T-cell (primary cell): ENCODE measurements at regions of chr5 and their contacts with region 1.

Region 1: DNA sequence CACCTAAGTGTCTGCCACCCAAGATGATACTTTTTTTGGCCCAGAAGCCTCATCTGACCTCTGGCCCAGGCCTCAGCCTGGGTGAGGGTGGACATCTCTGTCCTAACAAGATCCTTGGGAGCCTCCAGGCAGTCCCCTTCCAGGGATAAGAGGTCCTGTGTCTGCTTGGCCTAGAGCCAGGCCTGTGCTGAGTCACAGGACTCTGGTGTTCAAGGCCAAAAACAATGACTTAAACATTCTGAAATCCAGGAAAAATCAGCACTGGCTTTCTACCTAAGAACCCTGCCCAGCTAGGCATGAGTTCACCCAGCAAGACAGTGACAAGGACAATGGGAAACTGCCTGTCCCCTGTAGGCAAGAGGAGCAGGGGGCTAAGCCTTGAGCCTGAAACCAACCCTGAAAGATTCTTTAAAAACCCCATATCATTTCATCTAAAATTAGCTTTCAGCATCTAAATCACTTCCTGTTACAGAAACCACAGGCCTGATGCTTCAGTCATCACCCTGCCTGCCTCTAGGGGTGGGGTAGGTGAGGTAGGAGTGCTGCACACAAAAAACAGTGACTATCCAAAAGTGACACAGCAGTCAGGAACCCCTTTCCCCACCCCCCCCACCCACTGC is 29.9 kb downstream of the CSF2 start:
- DNase-seq: peak in 34 of 35 experiments; percentile 40 to 82 (median 69)
- ATAC-seq: peak; percentile 90 to 91 (median 90)
- H3K4me3 ChIP-seq: no peak overlapping the region
- H3K4me3 Mint-ChIP-seq: peak overlapping the region; percentile 15 to 55 (median 47)
- H3K27ac ChIP-seq: peak overlapping the region; percentile 93
- H3K27ac Mint-ChIP-seq: peak overlapping the region; percentile 85 to 88
- H3K4me1 ChIP-seq: peaks cover 14 to 66% of the 10 kb centered on the region in 2 experiments
- H3K4me1 Mint-ChIP-seq: peaks cover 62 to 79% (median 70%) of the 10 kb centered on the region in 3 donors
- H3K27me3 ChIP-seq: no peaks in the 10 kb centered on the region
- H3K27me3 Mint-ChIP-seq: no peaks in the 10 kb centered on the region

Region 2: DNA sequence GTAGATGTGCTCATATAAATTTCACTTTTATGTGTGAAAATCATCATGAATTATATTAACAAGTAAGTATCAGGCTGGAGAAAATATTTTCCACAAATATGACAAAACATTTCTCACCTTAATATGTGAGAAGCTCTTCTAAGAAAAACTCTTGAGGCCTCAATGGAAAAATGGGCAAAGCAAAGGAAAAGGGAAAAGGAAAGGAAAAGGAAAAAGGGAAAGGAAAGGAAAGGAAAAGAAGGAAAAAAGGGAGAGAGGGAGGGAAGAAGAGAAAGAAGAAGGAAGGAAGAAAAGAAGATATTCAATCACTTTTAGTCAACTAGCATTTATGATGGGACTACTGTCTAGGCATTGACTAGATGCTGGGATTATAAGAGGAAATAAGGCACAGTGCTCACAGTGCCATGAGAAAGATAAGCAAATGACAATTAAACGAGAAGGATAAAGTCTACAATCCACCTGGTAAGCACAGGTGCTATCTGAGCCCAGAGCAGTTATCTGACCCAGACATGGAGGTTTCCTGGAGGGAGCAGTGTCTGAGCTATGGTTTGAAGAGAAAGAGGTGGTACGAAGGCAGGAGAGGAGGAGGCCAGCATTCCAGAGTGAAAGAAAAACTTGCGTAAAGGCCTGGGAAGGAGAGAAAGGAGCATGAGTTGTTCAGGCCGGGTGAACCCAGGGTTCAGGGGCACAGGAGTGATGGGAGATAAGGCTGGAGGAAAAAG is 73.7 kb before region 1 on chr5:
- CTCF ChIA-PET with region 1: no interaction called
- POLR2A ChIA-PET with region 1: interaction called in 1 of 2 experiments, 16 read pairs
- DNase-seq: no peak
- ATAC-seq: no peak
- H3K4me3 ChIP-seq: no peak overlapping the region
- H3K4me3 Mint-ChIP-seq: no peak overlapping the region
- H3K27ac ChIP-seq: no peak overlapping the region
- H3K27ac Mint-ChIP-seq: no peak overlapping the region
- H3K4me1 ChIP-seq: peaks cover 0 to 28% of the 10 kb centered on the region in 2 experiments
- H3K4me1 Mint-ChIP-seq: peaks cover 4 to 20% (median 5%) of the 10 kb centered on the region in 3 donors
- H3K27me3 ChIP-seq: peaks cover 0 to 7% of the 10 kb centered on the region in 2 experiments
- H3K27me3 Mint-ChIP-seq: peaks cover 10 to 22% of the 10 kb centered on the region in 2 donors

Region 3: GRCh38 chr5:132963175-132964104 is 860.0 kb after region 1 on chr5 and contains the start of gene AFF4:
- CTCF ChIA-PET with region 1: no interaction called
- POLR2A ChIA-PET with region 1: interaction called in 1 of 2 experiments, 15 read pairs
- DNase-seq: peak; percentile 63 to 89 (median 77)
- ATAC-seq: peak; percentile 77 to 83 (median 82)
- H3K4me3 ChIP-seq: peak within 1 kb of the TSS; percentile 75 to 76
- H3K4me3 Mint-ChIP-seq: peak within 1 kb of the TSS; percentile 91 to 96 (median 93)
- H3K27ac ChIP-seq: peak within 1 kb of the TSS; percentile 94
- H3K27ac Mint-ChIP-seq: peak within 1 kb of the TSS; percentile 95 to 96
- H3K4me1 ChIP-seq: peaks cover 12 to 27% of the 10 kb centered on the region in 2 experiments
- H3K4me1 Mint-ChIP-seq: peaks cover 40% of the 10 kb centered on the region in 3 donors
- H3K27me3 ChIP-seq: no peaks in the 10 kb centered on the region
- H3K27me3 Mint-ChIP-seq: no peaks in the 10 kb centered on the region
- total RNA-seq, gene AFF4: 44.2 to 74.1 (median 53.0) TPM